A673 (cell line): ENCODE measurements at regions of chr12 and their contacts with region 1.

Region 1: GRCh38 chr12:49932533-49933130 is 17.9 kb upstream of the AQP2 start:
- DNase-seq: no peak
- H3K4me3 ChIP-seq: no peak overlapping the region
- H3K27ac ChIP-seq: no peak overlapping the region
- H3K4me1 ChIP-seq: no peaks in the 10 kb centered on the region
- H3K27me3 ChIP-seq: no peaks in the 10 kb centered on the region
- CTCF ChIP-seq: no peak

Region 2: GRCh38 chr12:49515266-49515665 is 417.4 kb before region 1 on chr12:
- CTCF ChIA-PET with region 1: no interaction called
- POLR2A ChIA-PET with region 1: no interaction called
- intact Hi-C with region 1: no loop called
- DNase-seq: no peak
- H3K4me3 ChIP-seq: no peak overlapping the region
- H3K27ac ChIP-seq: no peak overlapping the region
- H3K4me1 ChIP-seq: peaks cover 13% of the 10 kb centered on the region
- H3K27me3 ChIP-seq: no peaks in the 10 kb centered on the region
- CTCF ChIP-seq: no peak

Region 3: GRCh38 chr12:49903695-49904423 is 28.8 kb before region 1 on chr12 and contains the start of gene FAIM2:
- CTCF ChIA-PET with region 1: no interaction called
- POLR2A ChIA-PET with region 1: interaction called, 12 read pairs
- intact Hi-C with region 1: no loop called
- DNase-seq: peak; percentile 40
- H3K4me3 ChIP-seq: peak within 1 kb of the TSS; percentile 23
- H3K27ac ChIP-seq: no peak within 1 kb of the TSS
- H3K4me1 ChIP-seq: no peaks in the 10 kb centered on the region
- H3K27me3 ChIP-seq: no peaks in the 10 kb centered on the region
- CTCF ChIP-seq: no peak
- total RNA-seq, gene FAIM2: 0.11 TPM in 1 of 2 replicates, not detected in the other

Region 4: DNA sequence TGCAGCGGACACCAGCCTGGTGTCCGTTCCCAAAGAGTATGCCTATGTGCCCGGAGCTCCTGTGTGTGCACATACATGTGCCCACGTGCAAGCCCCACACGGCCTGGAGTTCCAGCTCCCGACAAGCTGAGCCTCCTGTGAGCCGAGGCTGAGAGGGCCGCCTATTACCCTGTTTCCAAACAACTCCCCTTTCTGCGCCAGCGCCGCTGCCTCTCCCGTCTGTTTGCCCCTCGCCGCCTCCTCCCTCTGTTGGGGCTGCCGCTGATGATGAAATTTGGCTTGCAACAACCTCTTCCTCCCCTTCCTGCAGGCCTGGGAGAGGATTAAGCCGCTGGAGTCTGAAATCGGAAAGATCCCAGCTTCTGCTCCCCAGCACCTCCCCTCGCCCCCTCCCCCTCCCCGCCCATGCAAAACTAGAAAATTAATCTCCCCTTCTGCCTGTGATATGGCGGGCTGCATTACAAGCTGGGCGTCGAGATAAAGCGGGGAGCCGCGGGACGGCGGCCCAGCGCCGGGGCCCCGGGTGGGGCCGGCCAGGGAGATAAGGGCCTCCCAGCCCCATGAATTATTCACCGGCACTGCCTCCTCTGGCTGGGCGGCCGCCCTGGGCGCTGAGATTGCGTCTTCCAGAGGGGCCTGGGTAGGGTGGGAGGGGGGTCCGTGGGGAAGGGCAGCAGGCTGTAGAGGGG is 117.9 kb after region 1 on chr12:
- CTCF ChIA-PET with region 1: no interaction called
- POLR2A ChIA-PET with region 1: no interaction called
- intact Hi-C with region 1: no loop called
- DNase-seq: peak; percentile 90
- H3K4me3 ChIP-seq: peak overlapping the region; percentile 26
- H3K27ac ChIP-seq: peak overlapping the region; percentile 60
- H3K4me1 ChIP-seq: peaks cover 21% of the 10 kb centered on the region
- H3K27me3 ChIP-seq: no peaks in the 10 kb centered on the region
- CTCF ChIP-seq: no peak